ENCODE measurements at regions of chr7 and their contacts with region 1.

Region 1: GRCh38 chr7:21507626-21508343 is 35.1 kb upstream of the DNAH11 start:
- DNase-seq: no peak
- H3K4me3 ChIP-seq: no peak overlapping the region
- H3K27me3 ChIP-seq: no peaks in the 10 kb centered on the region
- CTCF ChIP-seq: peak; percentile 78

Region 2: GRCh38 chr7:21256310-21256877 is 251.4 kb before region 1 on chr7:
- CTCF ChIA-PET with region 1: interaction called, 10 read pairs
- POLR2A ChIA-PET with region 1: no interaction called
- DNase-seq: no peak
- H3K4me3 ChIP-seq: no peak overlapping the region
- H3K27me3 ChIP-seq: peaks cover 1% of the 10 kb centered on the region; the same call in 1 of the 2 replicates
- CTCF ChIP-seq: peak; percentile 36; the same call in 1 of the 2 replicates

Region 3: GRCh38 chr7:21620054-21620453 is 112.3 kb after region 1 on chr7:
- CTCF ChIA-PET with region 1: no interaction called
- POLR2A ChIA-PET with region 1: no interaction called
- DNase-seq: no peak
- H3K4me3 ChIP-seq: no peak overlapping the region
- H3K27me3 ChIP-seq: no peaks in the 10 kb centered on the region
- CTCF ChIP-seq: no peak

Measured in BJ (cell line).